ENCODE measurements at regions of chr17 and their contacts with region 1.

Region 1: GRCh38 chr17:74199306-74200092 is 4.0 kb upstream of the RPL38 start:
- DNase-seq: peak in 3 of 5 donors; percentile 52 to 67 (median 62)
- H3K4me3 ChIP-seq: no peak overlapping the region
- H3K27ac ChIP-seq: no peak overlapping the region
- H3K4me1 ChIP-seq: peaks cover 1% of the 10 kb centered on the region
- H3K27me3 ChIP-seq: no peaks in the 10 kb centered on the region
- CTCF ChIP-seq: peak; percentile 55 to 63 (median 60)
- EP300 ChIP-seq: no peak
- POLR2A ChIP-seq: no peak

Region 2: DNA sequence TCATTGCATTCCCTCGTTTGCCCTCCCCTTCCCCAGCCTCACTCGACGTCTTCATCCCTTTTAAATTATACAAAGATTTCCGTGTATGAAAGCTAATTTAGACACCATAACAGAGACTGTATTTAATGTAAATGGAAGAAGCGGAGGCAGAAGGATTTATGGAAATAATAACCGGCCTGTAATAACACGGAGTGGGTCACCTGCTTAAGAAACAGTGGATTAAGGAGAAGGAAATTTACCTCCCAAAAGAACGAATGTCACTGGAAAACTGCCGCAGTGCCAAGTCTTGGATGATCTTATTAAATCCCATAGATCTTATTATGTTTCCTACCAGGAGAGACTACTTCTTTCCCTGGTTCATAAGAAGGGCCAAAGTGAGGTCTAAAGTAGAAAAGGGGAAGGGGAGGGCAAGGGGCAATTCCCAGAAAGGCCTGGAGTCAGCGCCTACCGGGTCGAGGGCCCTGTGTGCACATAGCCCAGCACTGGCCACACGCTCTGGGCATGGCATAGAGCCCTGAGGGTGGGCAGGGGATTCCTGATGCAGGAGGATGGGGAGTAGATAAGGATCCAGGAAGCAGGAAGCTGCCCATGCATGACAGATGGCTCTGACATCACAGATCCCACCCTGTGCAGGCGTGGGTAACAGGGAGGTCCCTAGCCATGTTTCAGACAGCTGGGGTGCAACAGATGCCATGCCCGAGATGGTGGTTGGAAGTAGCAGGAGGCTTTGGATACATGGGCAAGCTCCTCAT is 52.3 kb before region 1 on chr17:
- intact Hi-C with region 1: no loop called
- DNase-seq: no peak
- H3K4me3 ChIP-seq: no peak overlapping the region
- H3K27ac ChIP-seq: no peak overlapping the region
- H3K4me1 ChIP-seq: no peaks in the 10 kb centered on the region
- H3K27me3 ChIP-seq: no peaks in the 10 kb centered on the region
- CTCF ChIP-seq: no peak
- EP300 ChIP-seq: no peak
- POLR2A ChIP-seq: no peak

Region 3: DNA sequence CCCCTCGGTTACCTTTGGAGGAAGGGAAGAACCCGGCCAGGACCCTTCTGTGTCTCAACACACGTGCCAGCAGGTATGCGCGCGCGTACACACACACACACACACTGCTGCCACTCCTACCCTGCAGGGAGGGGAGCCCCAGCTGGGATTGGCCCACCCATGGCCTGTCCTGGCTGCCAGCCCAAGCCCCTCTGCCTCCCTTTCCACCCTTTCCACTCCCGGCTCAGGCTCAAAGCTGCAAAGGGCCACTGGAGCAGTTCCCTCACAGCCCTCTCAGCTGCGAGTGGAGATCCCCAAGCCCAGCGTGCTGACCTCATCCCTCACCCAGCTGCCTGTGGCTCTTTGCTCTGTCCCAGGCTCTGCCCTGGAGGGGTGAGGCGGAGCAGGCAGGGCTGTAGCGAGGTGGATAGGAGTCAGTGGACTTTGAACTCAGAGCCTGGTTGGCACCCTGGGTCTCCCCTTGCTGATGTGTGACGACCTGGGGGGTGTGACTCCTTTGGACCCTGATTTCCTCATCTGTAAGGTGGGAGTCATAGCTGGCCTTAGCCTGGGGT is 141.0 kb after region 1 on chr17:
- intact Hi-C with region 1: no loop called
- DNase-seq: no peak
- H3K4me3 ChIP-seq: no peak overlapping the region
- H3K27ac ChIP-seq: no peak overlapping the region
- H3K4me1 ChIP-seq: no peaks in the 10 kb centered on the region
- H3K27me3 ChIP-seq: no peaks in the 10 kb centered on the region
- CTCF ChIP-seq: no peak
- EP300 ChIP-seq: no peak
- POLR2A ChIP-seq: no peak

Region 4: DNA sequence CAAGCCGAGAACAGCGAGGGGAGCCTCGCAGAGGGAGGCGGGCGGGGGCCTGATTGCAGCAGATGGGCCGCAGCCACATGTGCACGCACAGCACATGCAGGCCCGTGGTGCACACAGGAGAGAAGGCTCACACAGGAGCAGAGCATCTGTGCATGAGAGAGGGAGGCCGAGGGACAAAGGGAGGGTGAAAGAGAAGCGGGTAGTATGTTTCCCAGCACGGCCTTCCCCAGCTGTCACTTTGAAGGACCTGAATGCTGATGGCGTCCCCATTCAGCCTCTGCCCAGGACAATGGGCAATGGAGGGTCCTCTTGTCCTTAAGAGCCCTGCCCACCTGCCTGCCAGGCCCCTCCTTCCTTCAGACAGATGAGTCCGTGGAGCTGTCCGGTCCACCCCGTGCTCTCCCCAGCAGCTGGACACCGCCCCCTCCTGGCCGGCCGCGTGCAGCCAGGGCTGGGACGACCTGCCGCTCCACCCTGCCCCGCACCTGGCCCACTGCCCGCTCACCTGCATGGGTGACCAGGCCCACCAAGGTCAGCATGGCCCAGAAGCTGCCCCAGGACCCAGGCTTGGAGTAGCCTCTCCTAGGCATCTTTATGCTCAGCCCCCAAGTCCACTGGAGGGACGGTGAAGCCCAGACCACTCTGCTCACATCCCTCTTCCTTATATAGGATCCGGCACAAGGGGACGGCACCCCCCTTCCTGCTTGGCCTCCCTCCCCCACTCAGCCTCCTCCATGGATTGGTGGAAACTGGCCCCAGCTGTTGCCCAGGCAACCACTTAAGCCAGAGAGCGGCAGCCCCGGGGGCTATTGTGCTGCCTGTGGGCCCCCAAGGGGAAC is 161.9 kb after region 1 on chr17 and contains the start of gene BTBD17:
- intact Hi-C with region 1: loop called in 1 of 4 experiments (anchors 5 kb)
- DNase-seq: peak; percentile 41 to 75 (median 66)
- H3K4me3 ChIP-seq: no peak within 1 kb of the TSS
- H3K27ac ChIP-seq: no peak within 1 kb of the TSS
- H3K4me1 ChIP-seq: no peaks in the 10 kb centered on the region
- H3K27me3 ChIP-seq: no peaks in the 10 kb centered on the region
- CTCF ChIP-seq: peak; percentile 23 to 61 (median 56)
- EP300 ChIP-seq: no peak
- POLR2A ChIP-seq: no peak
- total RNA-seq, gene BTBD17: not detected

Region 5: GRCh38 chr17:74497471-74497870 is 298.0 kb after region 1 on chr17:
- intact Hi-C with region 1: loop called in 1 of 4 experiments (anchors 5 kb)
- DNase-seq: no peak
- H3K4me3 ChIP-seq: no peak overlapping the region
- H3K27ac ChIP-seq: no peak overlapping the region
- H3K4me1 ChIP-seq: no peaks in the 10 kb centered on the region
- H3K27me3 ChIP-seq: no peaks in the 10 kb centered on the region
- CTCF ChIP-seq: no peak
- EP300 ChIP-seq: no peak
- POLR2A ChIP-seq: no peak